ENCODE measurements at regions of chr5 and their contacts with region 1.

Region 1: DNA sequence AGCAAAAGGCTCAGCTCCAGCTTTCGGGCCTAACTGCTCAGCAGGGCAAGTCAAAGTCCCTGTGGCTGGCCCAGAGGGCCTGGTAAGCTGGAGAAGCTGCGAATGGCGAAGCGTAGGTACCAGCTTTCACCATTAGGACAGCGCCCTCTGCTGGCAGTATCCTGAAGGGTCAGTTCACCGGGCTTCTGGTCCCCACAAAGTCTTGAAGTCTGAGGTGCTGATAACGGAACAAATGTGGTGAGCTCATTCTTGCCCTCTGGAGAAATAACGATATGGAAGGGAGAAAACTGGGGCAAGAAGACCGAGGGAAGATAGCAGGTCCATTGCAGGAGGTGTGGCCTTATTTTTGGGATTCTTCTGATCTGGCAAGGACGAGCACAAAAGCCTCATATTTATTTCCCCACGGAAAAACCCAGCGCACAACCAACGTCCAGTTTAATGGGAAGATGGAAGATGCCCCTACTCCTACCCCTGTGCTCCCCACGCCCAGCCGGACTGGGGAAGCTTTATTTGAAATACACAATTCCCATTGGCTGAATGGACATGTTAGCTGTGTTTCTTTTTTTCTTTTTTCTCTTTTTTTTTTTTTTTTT is 7.2 kb downstream of the SOWAHA start:
- DNase-seq: peak; percentile 90
- ATAC-seq: peak; percentile 84 to 96
- H3K4me3 ChIP-seq: no peak overlapping the region
- H3K27ac ChIP-seq: peak overlapping the region in 1 of 2 experiments; percentile 49; a peak in 1 of 6 replicates
- H3K4me1 ChIP-seq: 0 out of 3 replicates have a peak, but pooled peaks cover 3% of the 10 kb centered on the region
- CTCF ChIP-seq: peak; percentile 93
- EP300 ChIP-seq: no peak
- POLR2A ChIP-seq: no peak
- RAD21 ChIP-seq: peak; percentile 84 to 87

Region 2: DNA sequence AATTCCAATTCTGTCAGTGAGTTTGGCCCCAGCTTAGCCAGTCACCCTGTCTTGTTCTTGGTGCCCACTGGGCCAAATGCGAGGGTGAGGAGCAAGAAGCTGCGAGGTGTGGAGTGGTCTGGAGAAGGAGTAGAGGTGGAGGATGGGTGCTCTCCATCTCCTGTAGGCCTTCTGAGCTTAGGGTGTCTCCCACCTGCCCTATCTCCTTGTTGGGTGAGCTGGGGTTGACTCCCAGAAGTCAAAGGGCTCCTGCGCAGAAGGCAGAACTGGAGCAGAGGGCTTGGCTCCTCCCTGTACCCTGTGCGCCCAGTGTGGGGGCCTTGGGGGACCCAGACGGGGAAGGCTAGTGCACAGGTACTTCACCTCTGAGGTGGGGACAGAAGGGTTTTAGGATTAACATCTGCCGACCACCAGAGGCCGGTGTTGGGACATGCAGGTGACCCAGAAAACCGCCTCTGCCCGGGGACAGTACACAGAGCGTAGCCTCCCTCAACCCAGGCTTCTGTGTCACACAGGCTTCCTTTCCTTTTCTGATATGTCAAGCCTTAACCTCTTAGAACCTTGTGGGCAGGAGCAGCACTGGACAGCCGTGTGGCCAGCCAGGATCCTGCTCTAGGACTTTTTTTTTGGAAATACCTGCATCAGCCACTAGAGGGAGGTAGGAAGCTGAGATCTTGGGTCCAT is 293.8 kb before region 1 on chr5:
- CTCF ChIA-PET with region 1: interaction called, 46 read pairs
- POLR2A ChIA-PET with region 1: interaction called, 3 read pairs
- DNase-seq: peak; percentile 59 to 69
- ATAC-seq: peak; percentile 83 to 94
- H3K4me3 ChIP-seq: no peak overlapping the region
- H3K27ac ChIP-seq: peak overlapping the region in 1 of 2 experiments; percentile 62; a peak in 1 of 6 replicates
- H3K4me1 ChIP-seq: no peaks in the 10 kb centered on the region
- CTCF ChIP-seq: peak; percentile 98
- EP300 ChIP-seq: no peak
- POLR2A ChIP-seq: no peak
- RAD21 ChIP-seq: peak; percentile 70 to 83

Region 3: GRCh38 chr5:132746954-132747615 is 73.2 kb before region 1 on chr5 and contains the start of gene CCNI2:
- CTCF ChIA-PET with region 1: interaction called, 64 read pairs
- POLR2A ChIA-PET with region 1: no interaction called
- DNase-seq: peak; percentile 65 to 71
- ATAC-seq: peak; percentile 82 to 86
- H3K4me3 ChIP-seq: peak within 1 kb of the TSS; percentile 73
- H3K27ac ChIP-seq: peak within 1 kb of the TSS; percentile 72 to 87
- H3K4me1 ChIP-seq: no peaks in the 10 kb centered on the region
- CTCF ChIP-seq: peak; percentile 69
- EP300 ChIP-seq: no peak
- POLR2A ChIP-seq: no peak; the same call in 1 of the 2 replicates
- RAD21 ChIP-seq: peak; percentile 40 to 52; a peak in 3 of 5 replicates
- polyA plus RNA-seq, gene CCNI2: 0.17 and 0.33 TPM in 2 replicates

Region 4: GRCh38 chr5:132758451-132758850 is 61.8 kb before region 1 on chr5:
- CTCF ChIA-PET with region 1: interaction called, 26 read pairs
- POLR2A ChIA-PET with region 1: interaction called, 3 read pairs
- DNase-seq: no peak
- ATAC-seq: no peak
- H3K4me3 ChIP-seq: no peak overlapping the region
- H3K27ac ChIP-seq: no peak overlapping the region
- H3K4me1 ChIP-seq: no peaks in the 10 kb centered on the region
- CTCF ChIP-seq: no peak
- EP300 ChIP-seq: no peak
- POLR2A ChIP-seq: no peak
- RAD21 ChIP-seq: no peak

Region 5: DNA sequence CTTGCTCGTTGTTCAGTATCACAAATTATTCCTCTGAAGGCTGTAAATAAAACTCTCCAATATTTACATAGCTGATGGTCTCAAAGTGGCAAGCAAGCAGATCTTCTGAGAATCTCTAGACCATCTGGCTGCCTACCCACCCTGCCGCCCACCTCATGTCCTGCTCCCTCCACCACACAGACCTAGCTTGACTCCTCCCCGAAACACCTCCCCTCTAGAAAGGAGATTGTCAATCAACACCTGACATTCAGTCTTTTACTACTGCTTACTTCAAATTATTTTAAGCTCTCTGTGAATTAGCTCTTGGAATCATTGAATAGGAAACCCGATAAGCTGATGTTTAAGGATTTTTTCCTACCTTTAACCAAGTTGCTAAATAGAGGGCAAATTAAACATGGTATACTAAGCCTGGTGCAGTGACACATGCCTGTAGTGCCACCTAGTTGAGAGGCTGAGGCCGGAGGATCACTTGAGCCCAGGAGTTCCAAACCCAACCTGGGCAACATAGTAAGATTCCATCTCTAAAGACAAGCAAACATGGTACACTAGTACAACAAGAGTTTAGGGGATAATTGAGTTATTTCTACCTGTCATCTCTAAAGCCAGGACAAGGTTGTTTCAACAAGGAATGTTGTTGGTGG is 18.1 kb before region 1 on chr5:
- CTCF ChIA-PET with region 1: interaction called, 87 read pairs
- POLR2A ChIA-PET with region 1: no interaction called
- DNase-seq: no peak
- ATAC-seq: peak in 1 of 2 experiments; percentile 40; a peak in 1 of 6 replicates
- H3K4me3 ChIP-seq: no peak overlapping the region
- H3K27ac ChIP-seq: no peak overlapping the region
- H3K4me1 ChIP-seq: peaks cover 3% of the 10 kb centered on the region; the same call in 1 of the 3 replicates
- CTCF ChIP-seq: no peak
- EP300 ChIP-seq: no peak
- POLR2A ChIP-seq: no peak
- RAD21 ChIP-seq: peak in 1 of 2 experiments; percentile 26; a peak in 2 of 5 replicates

Region 6: DNA sequence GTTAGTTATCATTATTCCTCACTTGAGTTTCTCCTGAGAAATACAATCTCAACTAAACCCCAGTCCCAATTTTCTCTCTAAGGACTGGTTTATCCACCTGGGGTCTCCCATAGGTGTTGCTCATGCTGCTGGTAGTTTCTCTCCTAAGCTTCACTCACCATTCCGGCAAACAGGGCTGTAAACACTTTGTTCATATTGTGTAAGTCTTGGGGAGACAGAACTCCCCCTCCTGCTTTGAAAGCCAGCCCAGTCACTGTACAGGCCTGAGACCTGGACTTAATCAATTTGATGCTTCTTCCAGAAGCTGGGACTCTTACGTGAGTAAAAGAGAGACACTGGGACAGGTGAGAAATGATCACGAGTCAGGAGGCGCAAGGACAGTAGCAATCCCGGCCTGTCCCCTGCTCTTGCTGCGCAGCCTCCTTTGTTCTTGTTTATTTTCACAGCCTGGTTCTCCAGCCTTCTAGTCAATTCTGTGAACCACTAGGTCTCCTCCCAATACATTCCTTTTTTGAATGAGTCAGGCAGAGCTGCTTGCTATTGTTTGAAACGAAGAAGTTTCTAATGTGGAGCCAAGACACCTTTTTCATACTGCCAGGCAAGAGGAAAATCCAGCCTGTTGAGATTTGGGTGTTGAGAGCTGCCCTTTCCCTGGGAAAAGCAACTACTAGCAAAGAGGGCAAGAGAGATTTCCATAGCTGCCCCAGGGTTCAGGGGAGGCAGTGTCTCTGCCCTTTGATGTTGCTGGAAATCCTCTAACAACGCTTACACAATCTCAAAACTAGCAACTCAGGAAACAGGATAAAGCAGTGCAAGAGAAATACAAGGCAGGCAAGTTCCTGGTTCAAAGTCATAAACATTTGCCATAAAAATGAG is 19.4 kb after region 1 on chr5:
- CTCF ChIA-PET with region 1: interaction called, 82 read pairs
- POLR2A ChIA-PET with region 1: no interaction called
- DNase-seq: no peak
- ATAC-seq: no peak
- H3K4me3 ChIP-seq: no peak overlapping the region
- H3K27ac ChIP-seq: peak overlapping the region in 1 of 2 experiments; percentile 9; a peak in 1 of 6 replicates
- H3K4me1 ChIP-seq: peaks cover 4% of the 10 kb centered on the region; the same call in 1 of the 3 replicates
- CTCF ChIP-seq: no peak
- EP300 ChIP-seq: no peak
- POLR2A ChIP-seq: no peak
- RAD21 ChIP-seq: no peak